Ovary (tissue), 10 donors: ENCODE measurements at regions of chr2 and their contacts with region 1.

Region 1: DNA sequence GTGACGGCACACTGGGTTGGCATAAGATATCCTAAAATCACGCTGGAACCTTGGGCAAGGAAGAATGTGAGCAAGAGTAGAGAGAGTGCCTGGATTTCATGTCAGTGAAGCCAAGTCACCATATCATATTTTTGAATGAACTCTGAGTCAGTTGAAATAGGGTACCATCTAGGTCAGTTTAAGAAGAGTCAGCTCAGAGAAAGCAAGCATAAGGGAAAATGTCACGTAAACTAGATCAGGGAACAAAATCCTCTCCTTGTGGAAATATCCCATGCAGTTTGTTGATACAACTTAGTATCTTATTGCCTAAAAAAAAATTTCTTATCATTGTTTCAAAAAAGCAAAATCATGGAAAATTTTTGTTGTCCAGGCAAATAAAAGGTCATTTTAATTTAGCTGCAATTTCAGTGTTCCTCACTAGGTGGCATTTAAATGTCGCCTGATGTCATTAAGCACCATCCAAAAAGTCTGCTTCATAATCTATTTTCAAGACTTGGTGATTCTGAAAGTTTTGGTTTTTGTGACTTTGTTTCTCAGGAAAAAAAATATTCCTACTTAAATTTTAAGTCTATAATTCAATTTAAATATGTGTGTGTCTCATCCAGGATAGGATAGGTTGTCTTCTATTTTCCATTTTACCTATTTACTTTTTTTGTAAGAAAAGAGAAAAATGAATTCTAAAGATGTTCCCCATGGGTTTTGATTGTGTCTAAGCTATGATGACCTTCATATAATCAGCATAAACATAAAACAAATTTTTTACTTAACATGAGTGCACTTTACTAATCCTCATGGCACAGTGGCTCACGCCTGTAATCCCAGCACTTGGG is 19.6 kb downstream of the RSAD2 start:
- DNase-seq: no peak
- H3K4me3 ChIP-seq: no peak overlapping the region
- H3K27ac ChIP-seq: peak overlapping the region; percentile 40 to 60
- H3K4me1 ChIP-seq: no peaks in the 10 kb centered on the region
- H3K27me3 ChIP-seq: no peaks in the 10 kb centered on the region
- CTCF ChIP-seq: peak in 2 of 3 donors; percentile 64 to 69
- EP300 ChIP-seq: no peak
- POLR2A ChIP-seq: no peak

Region 2: GRCh38 chr2:7044261-7045250 is 147.4 kb after region 1 on chr2:
- intact Hi-C with region 1: loop called in 1 of 4 experiments (anchors 5 kb)
- DNase-seq: peak; percentile 49 to 81 (median 69)
- H3K4me3 ChIP-seq: no peak overlapping the region
- H3K27ac ChIP-seq: no peak overlapping the region
- H3K4me1 ChIP-seq: no peaks in the 10 kb centered on the region
- H3K27me3 ChIP-seq: no peaks in the 10 kb centered on the region
- CTCF ChIP-seq: peak; percentile 61 to 79 (median 71)
- EP300 ChIP-seq: no peak
- POLR2A ChIP-seq: no peak

Region 3: GRCh38 chr2:7467782-7468447 is 570.8 kb after region 1 on chr2:
- intact Hi-C with region 1: loop called in 1 of 4 experiments (anchors 5 kb)
- DNase-seq: no peak
- H3K4me3 ChIP-seq: no peak overlapping the region
- H3K27ac ChIP-seq: no peak overlapping the region
- H3K4me1 ChIP-seq: no peaks in the 10 kb centered on the region
- H3K27me3 ChIP-seq: no peaks in the 10 kb centered on the region
- CTCF ChIP-seq: no peak
- EP300 ChIP-seq: no peak
- POLR2A ChIP-seq: no peak